ENCODE measurements at regions of chr15 and their contacts with region 1.

Region 1: GRCh38 chr15:96330450-96331145 is at the start of gene NR2F2:
- DNase-seq: peak; percentile 96 to 98
- ATAC-seq: peak; percentile 77 to 89 (median 82)
- H3K4me3 ChIP-seq: peak within 1 kb of the TSS; percentile 92
- H3K27ac ChIP-seq: peak within 1 kb of the TSS; percentile 94
- H3K4me1 ChIP-seq: peaks cover 11% of the 10 kb centered on the region
- H3K27me3 ChIP-seq: peaks cover 0 to 15% (median 0%) of the 10 kb centered on the region in 3 donors
- CTCF ChIP-seq: no peak
- total RNA-seq, gene NR2F2: 14.5 to 17.1 (median 15.7) TPM

Region 2: GRCh38 chr15:96047255-96047931 is 283.2 kb before region 1 on chr15:
- intact Hi-C with region 1: loop called (anchors 10 kb)
- DNase-seq: no peak
- ATAC-seq: peak; percentile 65 to 86 (median 84)
- H3K4me3 ChIP-seq: no peak overlapping the region
- H3K27ac ChIP-seq: no peak overlapping the region
- H3K4me1 ChIP-seq: peaks cover 12% of the 10 kb centered on the region
- H3K27me3 ChIP-seq: no peaks in the 10 kb centered on the region
- CTCF ChIP-seq: no peak

Region 3: GRCh38 chr15:96053031-96053780 is 277.4 kb before region 1 on chr15:
- intact Hi-C with region 1: loop called (anchors 10 kb)
- DNase-seq: peak; percentile 24 to 78
- ATAC-seq: peak; percentile 86 to 94 (median 90)
- H3K4me3 ChIP-seq: peak overlapping the region; percentile 65
- H3K27ac ChIP-seq: peak overlapping the region; percentile 85
- H3K4me1 ChIP-seq: peaks cover 7% of the 10 kb centered on the region
- H3K27me3 ChIP-seq: no peaks in the 10 kb centered on the region
- CTCF ChIP-seq: no peak

Region 4: GRCh38 chr15:96234109-96234892 is 96.3 kb before region 1 on chr15:
- intact Hi-C with region 1: no loop called
- DNase-seq: peak in 1 of 2 donors; percentile 18
- ATAC-seq: no peak
- H3K4me3 ChIP-seq: no peak overlapping the region
- H3K27ac ChIP-seq: no peak overlapping the region
- H3K4me1 ChIP-seq: no peaks in the 10 kb centered on the region
- H3K27me3 ChIP-seq: no peaks in the 10 kb centered on the region
- CTCF ChIP-seq: no peak

Region 5: GRCh38 chr15:97521381-97522285 is 1191.0 kb after region 1 on chr15:
- intact Hi-C with region 1: loop called in 1 of 2 experiments (anchors 10 kb)
- DNase-seq: peak; percentile 20 to 76
- ATAC-seq: peak; percentile 78 to 93 (median 86)
- H3K4me3 ChIP-seq: peak overlapping the region; percentile 63
- H3K27ac ChIP-seq: peak overlapping the region; percentile 90
- H3K4me1 ChIP-seq: peaks cover 14% of the 10 kb centered on the region
- H3K27me3 ChIP-seq: no peaks in the 10 kb centered on the region
- CTCF ChIP-seq: no peak

Region 6: GRCh38 chr15:97759363-97759762 is 1428.8 kb after region 1 on chr15:
- intact Hi-C with region 1: loop called in 1 of 2 experiments (anchors 10 kb)
- DNase-seq: no peak
- ATAC-seq: no peak
- H3K4me3 ChIP-seq: no peak overlapping the region
- H3K27ac ChIP-seq: no peak overlapping the region
- H3K4me1 ChIP-seq: no peaks in the 10 kb centered on the region
- H3K27me3 ChIP-seq: peaks cover 0 to 2% (median 0%) of the 10 kb centered on the region in 3 donors
- CTCF ChIP-seq: no peak

Measured in psoas muscle (tissue), 8 donors.